ENCODE measurements at regions of chr6 and their contacts with region 1.

Region 1: DNA sequence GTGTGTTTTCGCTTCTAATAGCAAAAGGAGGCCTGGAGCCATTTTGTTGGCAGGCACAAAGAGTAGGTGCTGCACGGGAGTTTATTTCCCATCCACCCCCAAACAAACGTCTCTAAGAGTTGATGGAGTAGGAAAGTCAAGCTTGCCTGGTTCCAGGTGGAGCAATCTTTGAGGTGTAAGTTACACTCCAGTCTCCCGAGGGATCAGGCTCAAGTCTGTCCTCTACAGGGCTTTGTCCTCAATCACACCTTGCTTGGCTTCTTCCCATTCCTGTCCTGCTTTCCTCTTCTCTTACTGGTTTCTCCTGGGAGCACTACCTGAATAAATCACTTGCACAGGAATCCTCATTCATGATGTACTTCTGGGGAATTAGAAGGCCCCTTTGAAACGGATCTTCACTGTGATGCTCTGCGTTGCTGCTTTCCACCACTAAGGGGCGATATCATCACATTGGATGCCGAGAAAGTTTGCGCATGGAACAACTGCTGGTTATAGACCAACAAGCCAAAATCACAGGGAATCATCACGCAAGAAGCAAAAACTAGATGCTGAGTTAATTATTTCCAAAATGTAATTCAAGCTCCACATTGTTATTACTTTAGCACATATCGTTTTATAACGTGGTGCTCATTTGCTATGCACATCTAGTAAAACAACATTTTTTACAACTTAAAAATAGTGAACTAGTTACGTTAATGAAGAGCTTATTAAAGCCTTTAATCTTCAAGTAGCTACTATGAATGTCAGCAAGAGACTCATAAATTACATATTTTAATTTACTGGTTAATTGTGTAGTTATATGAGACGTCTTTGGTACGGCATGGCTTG is 156.8 kb downstream of the DNAH8 start:
- DNase-seq: peak; percentile 75
- ATAC-seq: peak; percentile 47
- H3K4me3 Mint-ChIP-seq: no peak overlapping the region
- H3K27ac Mint-ChIP-seq: no peak overlapping the region
- H3K4me1 Mint-ChIP-seq: peaks cover 29% of the 10 kb centered on the region
- H3K27me3 Mint-ChIP-seq: peaks cover 9% of the 10 kb centered on the region

Region 2: GRCh38 chr6:38924791-38925509 is 53.0 kb after region 1 on chr6:
- CTCF ChIA-PET with region 1: interaction called, 11 read pairs
- DNase-seq: no peak
- ATAC-seq: no peak
- H3K4me3 Mint-ChIP-seq: no peak overlapping the region
- H3K27ac Mint-ChIP-seq: no peak overlapping the region
- H3K4me1 Mint-ChIP-seq: peaks cover 3% of the 10 kb centered on the region
- H3K27me3 Mint-ChIP-seq: peaks cover 24% of the 10 kb centered on the region

Region 3: GRCh38 chr6:38933432-38933831 is 61.5 kb after region 1 on chr6:
- CTCF ChIA-PET with region 1: interaction called, 11 read pairs
- DNase-seq: no peak
- ATAC-seq: no peak
- H3K4me3 Mint-ChIP-seq: no peak overlapping the region
- H3K27ac Mint-ChIP-seq: no peak overlapping the region
- H3K4me1 Mint-ChIP-seq: no peaks in the 10 kb centered on the region
- H3K27me3 Mint-ChIP-seq: peaks cover 21% of the 10 kb centered on the region

Region 4: GRCh38 chr6:38955861-38956260 is 83.9 kb after region 1 on chr6:
- CTCF ChIA-PET with region 1: no interaction called
- DNase-seq: no peak
- ATAC-seq: no peak
- H3K4me3 Mint-ChIP-seq: no peak overlapping the region
- H3K27ac Mint-ChIP-seq: no peak overlapping the region
- H3K4me1 Mint-ChIP-seq: no peaks in the 10 kb centered on the region
- H3K27me3 Mint-ChIP-seq: peaks cover 28% of the 10 kb centered on the region

Region 5: GRCh38 chr6:38973178-38974054 is 101.5 kb after region 1 on chr6:
- CTCF ChIA-PET with region 1: interaction called, 12 read pairs
- DNase-seq: peak; percentile 46
- ATAC-seq: peak; percentile 83
- H3K4me3 Mint-ChIP-seq: no peak overlapping the region
- H3K27ac Mint-ChIP-seq: no peak overlapping the region
- H3K4me1 Mint-ChIP-seq: peaks cover 1% of the 10 kb centered on the region
- H3K27me3 Mint-ChIP-seq: peaks cover 64% of the 10 kb centered on the region

Region 6: DNA sequence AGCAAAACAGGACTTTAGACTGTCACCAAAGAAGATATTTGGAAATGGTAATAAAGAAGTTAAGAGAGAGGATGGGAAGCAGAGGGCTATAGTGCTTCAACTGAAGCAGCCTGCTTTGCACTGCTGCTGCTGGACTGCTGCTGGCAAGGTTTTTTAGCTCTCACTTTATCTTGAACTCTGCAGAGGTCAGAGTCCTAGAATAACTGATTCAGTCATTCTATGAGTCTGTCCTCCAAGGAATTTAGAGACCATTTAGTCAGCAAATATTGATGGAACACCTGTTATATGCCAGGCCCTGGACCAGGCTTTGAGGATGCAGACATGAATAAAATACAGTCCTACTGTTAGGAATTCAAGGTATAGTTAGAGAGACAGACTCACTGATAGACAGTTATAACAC is 252.2 kb after region 1 on chr6:
- CTCF ChIA-PET with region 1: no interaction called
- DNase-seq: no peak
- ATAC-seq: no peak
- H3K4me3 Mint-ChIP-seq: no peak overlapping the region
- H3K27ac Mint-ChIP-seq: no peak overlapping the region
- H3K4me1 Mint-ChIP-seq: no peaks in the 10 kb centered on the region
- H3K27me3 Mint-ChIP-seq: peaks cover 8% of the 10 kb centered on the region

Region 7: GRCh38 chr6:39309942-39310531 is 438.1 kb after region 1 on chr6:
- CTCF ChIA-PET with region 1: interaction called, 11 read pairs
- DNase-seq: peak; percentile 70
- ATAC-seq: peak; percentile 72
- H3K4me3 Mint-ChIP-seq: no peak overlapping the region
- H3K27ac Mint-ChIP-seq: no peak overlapping the region
- H3K4me1 Mint-ChIP-seq: peaks cover 5% of the 10 kb centered on the region
- H3K27me3 Mint-ChIP-seq: peaks cover 46% of the 10 kb centered on the region

Measured in activated CD8-positive, alpha-beta memory T cell treated with anti-CD3 and anti-CD28 coated beads, Interleukin-2, amount 10 ng/mL, durations not matched to agents 7 days and 5 days (primary cell).